ENCODE measurements at regions of chr10 and their contacts with region 1.

Region 1: DNA sequence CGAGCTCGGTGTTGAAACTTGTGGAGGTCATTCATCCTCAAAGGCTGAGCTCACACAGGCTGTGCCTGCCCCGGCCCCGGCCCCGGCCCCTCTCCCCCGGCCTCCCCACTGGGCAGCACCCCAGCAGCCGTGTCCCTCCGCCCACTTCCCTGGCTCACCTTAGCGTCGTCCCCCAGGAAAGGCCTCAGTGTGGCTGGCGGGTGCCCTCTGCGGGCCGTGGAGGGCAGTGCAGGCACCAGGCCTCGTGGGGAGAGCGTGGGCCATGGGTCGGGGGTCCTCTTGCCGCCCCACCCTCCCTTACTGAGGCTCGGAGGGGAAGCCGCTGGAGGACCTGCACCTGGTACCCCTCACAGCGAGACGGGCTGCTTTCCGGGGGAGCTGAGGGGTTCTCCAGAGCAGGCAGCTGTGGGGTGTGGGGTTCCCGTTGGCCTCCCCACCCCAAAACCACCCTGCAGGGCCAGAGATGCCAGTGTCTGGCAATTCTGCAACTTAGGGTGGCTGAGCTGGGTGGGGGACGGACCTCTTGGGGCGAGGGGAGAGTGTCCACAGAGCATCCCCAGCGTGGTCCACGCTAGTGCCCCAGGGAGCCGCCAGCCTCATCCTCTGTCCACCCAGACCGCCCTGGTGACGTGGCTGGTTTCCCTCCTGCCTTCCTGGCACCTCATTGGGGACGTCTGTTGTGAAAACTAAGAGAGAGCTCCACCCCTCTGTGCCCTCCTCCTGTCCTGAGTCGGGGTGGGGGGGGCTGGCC is 44.2 kb upstream of the DPYSL4 start:
- DNase-seq: peak in 5 of 6 donors; percentile 14 to 87 (median 63)
- ATAC-seq: peak; percentile 81 to 97 (median 90)
- H3K4me3 ChIP-seq: no peak overlapping the region
- H3K27ac ChIP-seq: no peak overlapping the region
- H3K4me1 ChIP-seq: no peaks in the 10 kb centered on the region
- H3K27me3 ChIP-seq: peaks cover 0 to 3% (median 0%) of the 10 kb centered on the region in 4 donors
- CTCF ChIP-seq: peak; percentile 82 to 92 (median 89)

Region 2: GRCh38 chr10:131874991-131875451 is 267.6 kb before region 1 on chr10:
- intact Hi-C with region 1: loop called in 2 of 3 experiments (anchors 5 to 10 kb)
- DNase-seq: peak; percentile 70 to 91 (median 84)
- ATAC-seq: peak; percentile 80 to 99 (median 93)
- H3K4me3 ChIP-seq: no peak overlapping the region
- H3K27ac ChIP-seq: no peak overlapping the region
- H3K4me1 ChIP-seq: peaks cover 0 to 3% (median 0%) of the 10 kb centered on the region in 3 donors
- H3K27me3 ChIP-seq: no peaks in the 10 kb centered on the region
- CTCF ChIP-seq: peak; percentile 47 to 63 (median 54)

Region 3: DNA sequence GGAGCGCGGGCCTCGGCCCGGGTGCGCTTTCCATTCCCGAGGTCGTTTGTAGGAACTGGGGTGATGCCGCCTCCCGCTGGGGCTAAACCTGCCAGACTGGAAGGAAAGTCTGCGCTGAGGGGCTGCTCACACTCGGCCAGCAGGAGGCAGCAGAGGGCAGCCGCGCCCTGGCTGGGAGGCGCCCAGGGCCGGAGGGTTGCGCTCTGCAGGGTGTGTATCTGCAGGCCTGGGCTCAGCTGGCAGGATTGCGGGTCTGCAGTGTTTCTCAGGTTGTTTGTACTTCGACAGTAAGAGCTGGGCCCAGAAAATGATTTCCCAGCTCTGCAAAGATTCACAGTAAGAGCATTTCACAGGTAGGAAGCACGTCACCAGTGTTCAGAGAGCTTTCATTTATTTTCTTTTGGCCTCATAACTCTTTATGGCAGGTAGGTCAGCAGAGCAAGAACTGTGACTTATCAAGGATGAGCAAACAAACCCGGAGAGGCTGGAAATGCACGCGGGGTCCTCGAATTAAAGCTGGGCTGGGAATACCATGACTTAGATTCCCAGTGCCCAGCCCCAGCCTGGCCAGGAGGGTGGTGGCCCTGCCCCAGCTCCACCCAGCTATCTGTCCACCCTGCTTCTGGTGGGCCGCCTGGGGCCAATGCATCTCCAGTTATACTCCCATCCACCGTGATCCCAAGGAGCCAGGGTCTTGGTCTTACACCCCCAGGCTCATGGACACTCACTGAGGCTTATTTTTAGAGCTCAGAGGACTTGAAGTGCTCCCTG is 257.0 kb before region 1 on chr10:
- intact Hi-C with region 1: loop called in 1 of 3 experiments (anchors 5 kb)
- DNase-seq: peak; percentile 72 to 98 (median 90)
- ATAC-seq: peak; percentile 95 to 100 (median 98)
- H3K4me3 ChIP-seq: peak overlapping the region in 1 of 4 donors; percentile 10
- H3K27ac ChIP-seq: no peak overlapping the region
- H3K4me1 ChIP-seq: no peaks in the 10 kb centered on the region
- H3K27me3 ChIP-seq: no peaks in the 10 kb centered on the region
- CTCF ChIP-seq: peak; percentile 92 to 98 (median 98)